Mammary epithelial cell (primary cell): ENCODE measurements at regions of chr10 and their contacts with region 1.

Region 1: DNA sequence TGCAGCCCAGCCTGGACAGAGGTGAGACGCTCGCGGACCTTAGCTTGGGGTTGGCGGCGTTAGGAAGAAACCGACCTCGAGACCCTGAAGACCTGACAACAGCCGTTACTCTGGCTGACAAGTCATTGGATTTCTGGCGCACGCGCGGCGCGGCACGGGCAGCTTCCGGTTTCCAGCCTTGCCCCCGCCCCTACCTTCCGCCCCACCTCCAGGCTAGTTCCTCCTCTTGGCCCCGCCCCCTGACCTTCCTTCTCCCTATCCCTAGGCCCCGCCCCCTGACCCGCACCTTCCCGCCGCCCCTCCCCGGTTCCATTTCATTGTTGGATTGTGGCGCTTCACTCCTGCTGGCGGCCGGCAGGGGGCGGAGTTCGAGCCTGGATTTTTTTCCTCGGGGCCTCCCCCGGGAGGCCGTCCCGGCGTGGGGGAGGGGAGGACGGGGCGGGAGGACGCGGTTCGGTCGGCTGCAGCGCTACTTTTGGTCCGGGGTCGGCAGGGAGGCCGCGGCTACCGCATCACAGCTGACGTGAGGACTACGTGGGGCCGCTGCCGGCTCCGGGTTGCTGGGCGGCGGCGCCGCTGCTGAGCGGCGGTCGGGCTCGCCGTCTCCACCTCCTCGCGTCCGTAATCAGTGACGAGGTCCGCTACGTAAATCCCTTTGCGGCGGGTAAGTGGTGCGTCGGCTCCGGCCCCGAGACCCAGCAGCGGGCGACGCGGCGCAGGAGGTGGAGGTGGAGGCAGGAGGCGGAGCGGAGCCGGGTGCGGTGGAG is at the start of gene CREM:
- DNase-seq: peak; percentile 94
- H3K4me3 ChIP-seq: peak within 1 kb of the TSS; percentile 68 to 91 (median 81)
- H3K27ac ChIP-seq: peak within 1 kb of the TSS; percentile 98
- H3K4me1 ChIP-seq: peaks cover 17% of the 10 kb centered on the region
- H3K27me3 ChIP-seq: no peaks in the 10 kb centered on the region
- CTCF ChIP-seq: peak; percentile 30 to 85
- total RNA-seq, gene CREM: 15.2 to 17.3 TPM

Region 2: DNA sequence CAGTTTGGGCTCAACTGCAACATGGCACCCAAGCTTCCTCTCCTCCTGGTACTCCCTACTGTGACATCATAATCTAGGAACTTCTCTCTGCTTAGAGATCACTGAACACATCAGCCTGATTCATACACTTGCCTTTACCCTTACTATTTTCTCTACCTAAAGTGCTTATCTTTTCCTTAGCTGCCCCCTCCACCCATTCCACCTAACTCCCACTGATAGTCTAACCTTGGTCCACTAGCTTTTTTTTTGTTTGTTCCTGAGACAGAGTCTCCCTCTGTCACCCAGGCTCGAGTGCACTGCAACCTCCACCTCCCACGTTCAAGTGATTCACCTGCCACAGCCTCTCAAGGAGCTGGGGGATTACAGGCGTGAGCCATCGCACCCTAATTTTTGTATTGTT is 52.4 kb before region 1 on chr10:
- CTCF ChIA-PET with region 1: no interaction called
- dilution Hi-C with region 1: loop called (anchors 5 kb)
- in situ Hi-C with region 1: no loop called
- intact Hi-C with region 1: no loop called
- DNase-seq: no peak
- H3K4me3 ChIP-seq: no peak overlapping the region
- H3K27ac ChIP-seq: no peak overlapping the region
- H3K4me1 ChIP-seq: peaks cover 4% of the 10 kb centered on the region
- H3K27me3 ChIP-seq: no peaks in the 10 kb centered on the region
- CTCF ChIP-seq: no peak

Region 3: DNA sequence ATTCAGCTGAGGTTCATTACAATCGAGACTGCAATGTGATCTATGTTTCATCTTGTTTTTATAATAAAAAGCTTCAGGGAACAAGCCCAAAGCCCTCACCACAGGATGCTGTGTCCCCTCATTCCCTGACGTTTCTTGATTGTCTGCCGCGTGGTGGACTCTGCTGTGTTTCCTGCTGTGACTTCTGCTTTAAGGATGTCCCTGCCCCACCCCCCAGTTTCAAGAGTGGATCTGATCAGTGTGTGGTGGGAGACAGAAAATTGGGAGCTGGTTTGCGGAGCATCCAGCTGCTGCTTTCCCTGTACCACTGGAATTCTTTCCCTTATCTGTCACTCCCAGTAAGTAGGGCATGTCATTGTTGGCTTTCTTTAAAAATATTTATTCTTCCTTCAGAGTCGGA is 86.1 kb after region 1 on chr10:
- CTCF ChIA-PET with region 1: interaction called, 4 read pairs
- dilution Hi-C with region 1: loop called (anchors 5 kb)
- in situ Hi-C with region 1: loop called in 1 of 2 experiments (anchors 5 kb)
- intact Hi-C with region 1: loop called (anchors 1 kb)
- DNase-seq: no peak
- H3K4me3 ChIP-seq: no peak overlapping the region
- H3K27ac ChIP-seq: no peak overlapping the region
- H3K4me1 ChIP-seq: no peaks in the 10 kb centered on the region
- H3K27me3 ChIP-seq: no peaks in the 10 kb centered on the region
- CTCF ChIP-seq: no peak

Region 4: GRCh38 chr10:35336084-35336831 is 209.5 kb after region 1 on chr10 and contains the start of gene CCNY:
- CTCF ChIA-PET with region 1: no interaction called
- dilution Hi-C with region 1: no loop called
- in situ Hi-C with region 1: no loop called
- intact Hi-C with region 1: loop called (anchors 10 kb)
- DNase-seq: peak; percentile 71
- H3K4me3 ChIP-seq: peak within 1 kb of the TSS; percentile 87 to 90 (median 88)
- H3K27ac ChIP-seq: peak within 1 kb of the TSS; percentile 79
- H3K4me1 ChIP-seq: peaks cover 40% of the 10 kb centered on the region
- H3K27me3 ChIP-seq: no peaks in the 10 kb centered on the region
- CTCF ChIP-seq: no peak
- total RNA-seq, gene CCNY: 32.0 to 62.3 TPM

Region 5: GRCh38 chr10:35563261-35563891 is 436.7 kb after region 1 on chr10:
- CTCF ChIA-PET with region 1: no interaction called
- dilution Hi-C with region 1: no loop called
- in situ Hi-C with region 1: loop called in 1 of 2 experiments (anchors 25 kb)
- intact Hi-C with region 1: loop called (anchors 5 kb)
- DNase-seq: peak; percentile 45
- H3K4me3 ChIP-seq: no peak overlapping the region
- H3K27ac ChIP-seq: no peak overlapping the region
- H3K4me1 ChIP-seq: no peaks in the 10 kb centered on the region
- H3K27me3 ChIP-seq: no peaks in the 10 kb centered on the region
- CTCF ChIP-seq: peak; percentile 99 to 100

Region 6: DNA sequence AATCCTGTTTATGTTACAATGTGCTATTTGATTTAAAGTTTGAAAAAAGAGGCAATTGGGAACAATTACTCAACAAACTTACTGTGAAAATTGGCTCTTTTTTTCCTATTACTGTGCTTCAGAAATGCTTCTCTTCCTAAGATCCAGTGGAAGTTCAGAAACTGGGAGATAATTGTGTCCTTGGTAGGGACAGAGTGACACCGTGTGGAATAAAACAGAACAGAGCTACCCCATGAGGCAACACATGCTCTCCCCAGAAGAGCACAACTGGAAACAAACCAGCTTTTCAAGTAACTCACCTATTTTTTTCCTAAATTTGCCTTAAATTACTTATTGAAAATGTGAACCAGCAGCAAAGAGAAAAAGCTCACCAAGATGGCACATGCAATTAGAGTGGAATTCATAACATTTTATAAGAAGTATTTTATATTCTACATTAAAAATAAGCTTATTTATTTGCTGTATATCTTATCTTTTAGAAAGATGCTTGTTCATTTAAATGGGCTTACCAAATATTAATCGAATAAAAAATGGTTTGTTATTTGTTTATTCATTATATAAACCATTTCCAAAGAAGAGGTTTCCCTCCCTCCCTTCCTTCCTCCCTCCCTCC is 1652.6 kb after region 1 on chr10:
- CTCF ChIA-PET with region 1: interaction called, 3 read pairs
- dilution Hi-C with region 1: no loop called
- in situ Hi-C with region 1: no loop called
- intact Hi-C with region 1: loop called (anchors 5 kb)
- DNase-seq: peak; percentile 57
- H3K4me3 ChIP-seq: no peak overlapping the region
- H3K27ac ChIP-seq: no peak overlapping the region
- H3K4me1 ChIP-seq: no peaks in the 10 kb centered on the region
- H3K27me3 ChIP-seq: no peaks in the 10 kb centered on the region
- CTCF ChIP-seq: peak; percentile 71 to 76